ENCODE measurements at regions of chr1 and their contacts with region 1.

Region 1: GRCh38 chr1:155957411-155957915 is 16.0 kb downstream of the RXFP4 start:
- DNase-seq: no peak
- H3K4me3 ChIP-seq: no peak overlapping the region
- H3K27ac ChIP-seq: no peak overlapping the region
- H3K4me1 ChIP-seq: peaks cover 0 to 1% of the 10 kb centered on the region in 2 donors
- H3K27me3 ChIP-seq: no peaks in the 10 kb centered on the region
- CTCF ChIP-seq: no peak
- POLR2A ChIP-seq: no peak

Region 2: GRCh38 chr1:156009404-156009803 is 51.9 kb after region 1 on chr1:
- intact Hi-C with region 1: loop called (anchors 2 kb)
- DNase-seq: no peak
- H3K4me3 ChIP-seq: no peak overlapping the region
- H3K27ac ChIP-seq: peak overlapping the region in 1 of 2 donors; percentile 58
- H3K4me1 ChIP-seq: no peaks in the 10 kb centered on the region
- H3K27me3 ChIP-seq: no peaks in the 10 kb centered on the region
- CTCF ChIP-seq: no peak
- POLR2A ChIP-seq: no peak

Region 3: DNA sequence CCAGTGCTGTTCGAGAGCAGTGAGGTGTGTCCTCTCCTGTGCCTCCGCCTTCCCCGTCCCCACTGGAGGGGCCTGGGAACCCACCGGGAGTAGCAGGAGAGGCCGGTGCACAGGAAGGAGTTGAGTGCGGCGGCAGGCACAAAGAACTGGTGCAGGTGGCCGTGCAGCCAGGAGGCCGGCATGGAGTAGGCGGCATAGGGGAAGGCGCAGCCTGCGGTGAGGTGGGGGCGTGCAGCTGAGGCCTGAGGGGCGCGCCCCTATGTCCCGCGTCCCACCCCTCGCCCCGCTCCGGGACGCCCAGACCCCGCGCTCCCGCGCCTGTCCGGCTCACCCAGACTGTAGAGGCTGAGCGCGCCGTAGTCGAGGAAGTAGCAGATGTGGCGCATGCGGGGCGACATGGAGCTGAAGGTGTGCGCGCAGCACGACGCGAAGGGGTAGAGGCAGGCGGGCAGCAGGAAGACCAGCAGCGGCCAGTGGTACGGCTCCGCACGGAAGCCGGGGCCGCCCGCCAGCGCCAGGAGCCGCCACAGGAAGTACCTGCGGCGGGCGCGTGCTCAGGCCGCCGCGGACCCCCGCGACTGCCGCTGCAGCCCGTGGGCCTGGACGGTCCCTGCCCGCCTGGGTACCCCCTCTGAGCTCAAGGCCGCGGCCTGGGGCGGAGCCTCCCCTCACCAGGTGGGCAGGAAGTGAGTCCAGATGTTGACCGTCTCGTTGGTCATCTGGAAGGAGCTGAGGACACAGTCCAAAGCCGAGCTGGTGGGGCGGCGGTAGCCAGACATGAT is 288.2 kb after region 1 on chr1:
- intact Hi-C with region 1: no loop called
- DNase-seq: no peak
- H3K4me3 ChIP-seq: peak overlapping the region; percentile 10 to 54 (median 39)
- H3K27ac ChIP-seq: no peak overlapping the region
- H3K4me1 ChIP-seq: peaks cover 0 to 11% of the 10 kb centered on the region in 2 donors
- H3K27me3 ChIP-seq: no peaks in the 10 kb centered on the region
- CTCF ChIP-seq: no peak
- POLR2A ChIP-seq: no peak